Heart left ventricle (tissue), 16 donors: ENCODE measurements at regions of chr1 and their contacts with region 1.

Region 1: DNA sequence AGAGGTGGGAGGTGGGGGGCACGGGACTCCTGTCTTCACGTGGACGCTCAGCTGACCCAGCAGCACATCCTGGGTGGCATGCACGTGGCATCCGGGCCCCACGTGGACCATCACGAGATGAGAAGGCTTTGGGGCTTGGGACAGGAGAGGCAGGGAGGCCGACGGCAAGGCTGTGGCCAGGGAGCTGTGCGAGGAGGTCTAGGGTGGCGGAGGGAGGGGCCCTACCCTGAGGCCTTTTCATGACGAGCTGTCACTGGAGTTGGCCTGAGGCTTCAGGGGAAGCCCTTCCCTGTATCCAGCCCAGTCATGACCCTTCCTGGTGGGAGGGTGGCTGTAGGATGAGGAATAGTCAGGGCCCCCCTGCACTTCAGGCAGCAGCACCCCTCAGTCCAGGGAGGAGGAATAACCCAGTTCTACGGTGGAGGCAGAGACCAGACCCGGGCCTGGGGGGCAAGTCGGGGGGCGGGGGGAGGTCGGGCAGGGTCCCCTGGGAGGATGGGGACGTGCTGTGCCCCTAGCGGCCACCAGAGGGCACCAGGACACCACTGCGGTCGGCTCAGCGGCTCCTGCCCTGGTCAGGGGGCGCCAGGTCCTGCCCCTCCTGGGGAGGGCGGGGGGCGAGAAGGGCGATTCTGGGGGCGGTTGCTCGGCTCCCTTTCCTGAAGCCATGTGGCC is 2.0 kb upstream of the PERM1 start:
- DNase-seq: peak; percentile 44 to 75 (median 60)
- ATAC-seq: no peak
- H3K4me3 ChIP-seq: peak overlapping the region in 6 of 12 donors; percentile 10 to 45 (median 28)
- H3K27ac ChIP-seq: peak overlapping the region in 3 of 12 donors; percentile 13 to 98 (median 19)
- H3K4me1 ChIP-seq: peaks cover 0 to 34% (median 2%) of the 10 kb centered on the region in 12 donors
- H3K27me3 ChIP-seq: peaks cover 0 to 12% (median 0%) of the 10 kb centered on the region in 9 donors
- CTCF ChIP-seq: peak; percentile 87 to 98 (median 92)
- POLR2A ChIP-seq: no peak

Region 2: DNA sequence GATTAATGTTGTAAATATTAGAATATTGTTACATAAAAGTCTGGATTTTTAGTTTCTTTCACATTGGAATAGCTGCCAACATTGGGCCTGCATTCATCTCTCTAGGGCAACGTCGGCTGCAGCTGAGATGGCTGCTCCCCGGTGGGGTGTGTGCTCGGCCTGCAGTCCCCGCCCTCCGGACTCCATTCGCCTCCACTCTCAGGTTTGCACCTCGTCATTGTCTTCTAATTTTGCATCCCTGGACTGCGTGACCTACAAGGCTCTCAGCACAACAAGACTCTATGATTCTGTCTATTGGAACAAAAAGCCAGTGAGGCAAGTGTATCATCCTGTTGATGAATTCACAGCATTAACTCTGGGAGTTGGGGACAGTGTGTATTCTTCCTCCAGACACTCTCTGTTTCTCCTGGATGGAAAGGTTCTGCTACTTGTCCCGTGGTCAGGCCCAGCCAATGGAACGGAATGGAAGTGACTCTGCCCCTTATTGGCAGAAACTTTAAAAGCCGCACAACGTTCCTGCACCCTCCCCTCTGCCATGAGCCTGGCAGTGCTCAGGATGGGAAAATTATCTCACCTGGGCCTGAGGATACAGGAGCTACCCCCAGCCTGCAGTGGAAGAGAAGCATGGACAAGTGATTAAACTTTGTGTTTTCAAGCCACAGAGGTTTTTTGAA is 165.2 kb before region 1 on chr1:
- intact Hi-C with region 1: no loop called
- DNase-seq: no peak
- ATAC-seq: peak in 3 of 4 donors; percentile 19 to 35 (median 34)
- H3K4me3 ChIP-seq: no peak overlapping the region
- H3K27ac ChIP-seq: peak overlapping the region in 3 of 12 donors; percentile 23 to 78 (median 40)
- H3K4me1 ChIP-seq: peaks cover 0 to 33% (median 13%) of the 10 kb centered on the region in 12 donors
- H3K27me3 ChIP-seq: no peaks in the 10 kb centered on the region
- CTCF ChIP-seq: no peak
- POLR2A ChIP-seq: no peak

Region 3: DNA sequence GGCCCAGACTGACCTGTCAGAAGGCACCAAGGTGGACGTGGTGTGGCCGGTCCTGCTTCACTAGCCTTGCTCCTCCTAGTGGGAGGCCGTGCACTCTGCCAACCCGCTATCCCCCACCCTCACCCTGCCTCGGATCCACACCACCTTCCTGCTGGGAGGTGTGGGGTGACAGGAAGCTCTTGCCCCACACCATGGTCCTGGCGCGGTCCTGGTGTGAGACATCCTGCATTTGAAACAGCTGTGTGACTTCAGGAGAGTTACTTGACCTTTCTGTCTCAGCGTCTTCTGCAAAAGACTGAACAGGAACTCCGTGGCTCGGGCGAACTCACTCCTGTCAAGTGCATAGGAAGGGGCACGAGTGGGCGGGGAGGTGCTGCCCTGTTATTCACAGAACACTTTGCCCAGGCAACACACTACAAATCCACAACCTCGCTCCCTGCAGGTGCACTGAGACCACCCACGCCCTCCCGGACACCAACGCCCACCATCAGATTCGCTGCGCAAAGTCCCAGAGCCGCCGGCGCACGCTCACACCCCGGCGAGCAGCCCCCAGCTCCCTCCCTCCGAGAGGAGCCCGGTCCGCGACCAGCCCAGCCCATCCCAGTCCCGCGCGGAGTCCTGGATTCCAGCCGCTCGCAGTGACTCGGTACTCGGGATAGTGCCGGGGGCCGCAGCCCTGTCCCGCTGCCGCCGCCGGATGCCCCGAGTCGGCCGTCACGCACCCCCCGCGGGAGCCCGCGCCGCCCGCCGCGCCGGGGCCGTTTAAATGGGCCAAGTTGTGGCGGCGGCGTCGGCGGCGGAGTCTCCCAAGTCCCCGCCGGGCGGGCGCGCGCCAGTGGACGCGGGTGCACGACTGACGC is 60.6 kb before region 1 on chr1 and contains the start of gene SAMD11:
- intact Hi-C with region 1: no loop called
- DNase-seq: peak; percentile 85 to 93 (median 90)
- ATAC-seq: peak in 3 of 4 donors; percentile 52 to 74 (median 63)
- H3K4me3 ChIP-seq: peak within 1 kb of the TSS; percentile 35 to 71 (median 50)
- H3K27ac ChIP-seq: peak within 1 kb of the TSS in 3 of 12 donors; percentile 29 to 53 (median 43)
- H3K4me1 ChIP-seq: peaks cover 0 to 50% (median 33%) of the 10 kb centered on the region in 12 donors
- H3K27me3 ChIP-seq: peaks cover 34 to 95% (median 55%) of the 10 kb centered on the region in 9 donors
- CTCF ChIP-seq: no peak
- POLR2A ChIP-seq: no peak
- total RNA-seq, gene SAMD11: 0.38 to 3.2 (median 0.96) TPM

Region 4: GRCh38 chr1:1291548-1292441 is 307.9 kb after region 1 on chr1:
- intact Hi-C with region 1: loop called in 1 of 10 experiments (anchors 10 kb)
- DNase-seq: peak in 4 of 5 donors; percentile 65 to 81 (median 73)
- ATAC-seq: peak; percentile 65 to 82 (median 66)
- H3K4me3 ChIP-seq: no peak overlapping the region
- H3K27ac ChIP-seq: no peak overlapping the region
- H3K4me1 ChIP-seq: peaks cover 0 to 15% (median 7%) of the 10 kb centered on the region in 12 donors
- H3K27me3 ChIP-seq: peaks cover 0 to 4% (median 0%) of the 10 kb centered on the region in 9 donors
- CTCF ChIP-seq: peak; percentile 47 to 69 (median 62)
- POLR2A ChIP-seq: no peak